Panc1 (cell line): ENCODE measurements at regions of chr12 and their contacts with region 1.

Region 1: GRCh38 chr12:82383930-82384552 is 25.7 kb downstream of the METTL25 start:
- DNase-seq: no peak
- ATAC-seq: peak; percentile 76; the same call in 1 of the 2 replicates
- H3K4me3 ChIP-seq: no peak overlapping the region
- H3K27ac ChIP-seq: no peak overlapping the region
- H3K4me1 ChIP-seq: no peaks in the 10 kb centered on the region
- H3K27me3 ChIP-seq: no peaks in the 10 kb centered on the region
- CTCF ChIP-seq: peak; percentile 62; the same call in 1 of the 2 replicates

Region 2: DNA sequence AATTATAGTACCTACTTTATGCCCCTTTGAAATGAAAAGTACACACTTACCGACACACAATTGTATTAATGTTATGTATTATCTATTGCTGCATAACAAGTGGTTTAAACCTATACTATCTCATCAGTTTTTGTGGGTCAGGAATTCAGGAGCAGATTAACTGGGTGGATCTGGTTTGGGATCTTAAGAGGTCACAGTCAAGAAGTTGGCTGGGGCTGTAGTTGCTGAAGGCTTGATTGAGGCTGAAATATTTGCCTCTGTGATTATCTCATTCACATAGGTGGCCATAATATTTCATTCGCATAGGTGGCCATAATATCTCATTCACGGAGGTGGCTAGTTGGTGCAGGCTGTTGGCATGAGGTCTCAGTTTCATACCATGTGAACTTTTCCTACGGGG is 20.1 kb before region 1 on chr12:
- CTCF ChIA-PET with region 1: no interaction called
- POLR2A ChIA-PET with region 1: interaction called, 10 read pairs
- in situ Hi-C with region 1: no loop called
- intact Hi-C with region 1: no loop called
- DNase-seq: no peak
- ATAC-seq: no peak
- H3K4me3 ChIP-seq: no peak overlapping the region
- H3K27ac ChIP-seq: no peak overlapping the region
- H3K4me1 ChIP-seq: peaks cover 5% of the 10 kb centered on the region
- H3K27me3 ChIP-seq: no peaks in the 10 kb centered on the region
- CTCF ChIP-seq: no peak

Region 3: GRCh38 chr12:82527165-82527780 is 143.2 kb after region 1 on chr12:
- CTCF ChIA-PET with region 1: no interaction called
- POLR2A ChIA-PET with region 1: no interaction called
- in situ Hi-C with region 1: no loop called
- intact Hi-C with region 1: loop called (anchors 10 kb)
- DNase-seq: peak; percentile 30
- ATAC-seq: 0 out of 2 replicates have a peak, but pooled peaks have one; percentile 68
- H3K4me3 ChIP-seq: no peak overlapping the region
- H3K27ac ChIP-seq: no peak overlapping the region
- H3K4me1 ChIP-seq: no peaks in the 10 kb centered on the region
- H3K27me3 ChIP-seq: no peaks in the 10 kb centered on the region; the same call in 1 of the 2 replicates
- CTCF ChIP-seq: peak; percentile 83; the same call in 1 of the 2 replicates

Region 4: GRCh38 chr12:82627569-82628198 is 243.6 kb after region 1 on chr12:
- CTCF ChIA-PET with region 1: no interaction called
- POLR2A ChIA-PET with region 1: no interaction called
- in situ Hi-C with region 1: no loop called
- intact Hi-C with region 1: loop called (anchors 5 kb)
- DNase-seq: no peak
- ATAC-seq: peak; percentile 63; the same call in 1 of the 2 replicates
- H3K4me3 ChIP-seq: no peak overlapping the region
- H3K27ac ChIP-seq: no peak overlapping the region
- H3K4me1 ChIP-seq: no peaks in the 10 kb centered on the region
- H3K27me3 ChIP-seq: no peaks in the 10 kb centered on the region
- CTCF ChIP-seq: peak; percentile 54

Region 5: GRCh38 chr12:82685790-82686167 is 301.7 kb after region 1 on chr12:
- CTCF ChIA-PET with region 1: no interaction called
- POLR2A ChIA-PET with region 1: no interaction called
- in situ Hi-C with region 1: no loop called
- intact Hi-C with region 1: loop called (anchors 5 kb)
- DNase-seq: peak; percentile 59
- ATAC-seq: peak; percentile 89
- H3K4me3 ChIP-seq: peak overlapping the region; percentile 73 to 86
- H3K27ac ChIP-seq: no peak overlapping the region; the same call in 1 of the 2 replicates
- H3K4me1 ChIP-seq: no peaks in the 10 kb centered on the region
- H3K27me3 ChIP-seq: peaks cover 6% of the 10 kb centered on the region
- CTCF ChIP-seq: peak; percentile 85